Dendritic cell treated with granulocyte-macrophage colony-stimulating factor and Interleukin-4, amounts not matched to agents 40 ng/mL and 50 ng/mL, for 4 days (primary cell): ENCODE measurements at regions of chr15 and their contacts with region 1.

Region 1: DNA sequence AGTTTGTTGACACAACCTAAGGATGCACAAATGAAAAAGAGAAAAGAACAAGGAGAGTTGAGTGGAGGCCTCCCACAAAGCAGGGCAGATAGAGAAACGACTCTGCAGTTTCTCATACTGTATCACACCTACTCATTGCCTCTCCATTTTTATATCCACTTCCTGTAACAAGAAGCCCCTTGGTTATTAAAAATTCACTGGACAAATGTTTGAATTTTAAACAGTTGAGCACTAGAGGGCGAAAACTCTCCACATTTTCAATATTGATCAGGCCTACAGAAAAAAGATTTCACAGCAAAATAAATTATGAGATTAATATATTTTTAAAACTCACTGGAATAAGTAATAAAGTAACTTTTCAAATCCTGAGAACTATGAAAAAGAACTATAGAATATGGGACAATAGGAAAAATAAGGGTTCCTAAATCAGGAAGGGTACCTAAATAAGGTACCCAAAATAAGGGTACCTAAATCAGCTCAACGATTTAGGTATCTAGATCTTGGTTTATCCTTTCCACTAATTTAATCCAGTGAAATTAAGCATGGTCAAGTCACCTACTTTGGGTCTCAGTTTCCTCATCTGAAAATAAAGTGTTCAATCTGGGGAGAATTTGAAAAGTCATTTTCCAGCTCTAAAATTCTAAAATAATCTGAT is 47.0 kb upstream of the PPIB start:
- H3K4me3 Mint-ChIP-seq: no peak overlapping the region
- H3K27ac Mint-ChIP-seq: no peak overlapping the region
- H3K4me1 Mint-ChIP-seq: no peaks in the 10 kb centered on the region
- H3K27me3 Mint-ChIP-seq: no peaks in the 10 kb centered on the region

Region 2: DNA sequence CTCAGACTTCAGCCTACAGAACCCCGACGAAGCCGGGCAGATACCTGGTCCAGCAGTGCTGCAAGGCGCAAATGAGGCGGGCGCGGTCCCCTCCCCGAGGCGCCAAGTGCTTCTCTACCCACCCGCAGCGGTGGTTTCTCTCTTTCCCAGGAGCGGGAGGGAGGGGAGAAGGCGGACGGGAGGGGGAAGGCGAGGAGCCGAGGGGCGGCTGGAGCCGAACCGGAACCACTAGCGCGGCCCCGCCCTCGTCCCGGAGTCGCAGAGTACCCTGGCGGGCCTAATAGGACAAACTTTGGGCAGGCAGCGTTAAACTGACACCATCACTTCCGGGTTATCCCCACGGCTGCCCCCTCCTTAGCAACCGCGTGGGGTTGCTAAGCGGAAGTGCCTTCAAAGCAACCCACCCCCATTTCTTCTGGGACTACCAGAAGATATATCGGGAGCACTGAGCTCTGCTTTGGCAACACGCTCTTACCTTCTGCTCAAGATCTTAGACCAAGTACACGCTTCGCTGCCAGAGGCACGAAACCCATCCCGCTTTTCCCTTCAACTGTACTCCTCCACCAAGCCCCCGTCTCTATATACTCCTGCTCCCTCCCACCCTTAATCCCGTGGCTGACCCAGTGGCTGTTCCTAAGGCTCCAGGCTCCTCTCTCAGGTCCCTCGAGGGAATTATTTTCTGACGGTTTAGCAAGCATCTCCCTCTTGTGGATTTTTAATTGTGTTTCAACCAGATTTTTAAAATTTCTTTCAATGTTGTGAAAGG is 146.3 kb after region 1 on chr15 and contains the start of gene CSNK1G1:
- intact Hi-C with region 1: loop called (anchors 10 kb)
- H3K4me3 Mint-ChIP-seq: peak within 1 kb of the TSS; percentile 98
- H3K27ac Mint-ChIP-seq: peak within 1 kb of the TSS; percentile 94
- H3K4me1 Mint-ChIP-seq: peaks cover 28% of the 10 kb centered on the region
- H3K27me3 Mint-ChIP-seq: no peaks in the 10 kb centered on the region

Region 3: DNA sequence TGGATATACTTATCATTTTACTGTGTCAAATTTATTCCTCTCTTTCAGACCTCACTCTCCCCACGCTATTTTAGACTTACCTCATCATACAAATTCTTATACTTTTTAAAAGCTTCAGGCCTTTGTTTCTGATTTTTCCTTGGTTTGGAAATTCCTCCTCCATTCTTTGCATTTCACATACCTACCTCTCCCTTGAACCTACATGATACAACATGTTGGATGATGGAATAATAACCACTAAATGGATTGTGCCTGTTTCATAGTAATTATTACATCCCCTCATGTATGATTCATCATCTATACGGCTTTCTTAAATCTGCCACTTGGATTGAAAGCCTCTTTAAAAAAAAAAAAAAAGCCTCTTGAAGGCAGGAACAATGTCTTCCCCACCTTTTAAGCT is 202.4 kb after region 1 on chr15:
- intact Hi-C with region 1: no loop called
- H3K4me3 Mint-ChIP-seq: no peak overlapping the region
- H3K27ac Mint-ChIP-seq: no peak overlapping the region
- H3K4me1 Mint-ChIP-seq: no peaks in the 10 kb centered on the region
- H3K27me3 Mint-ChIP-seq: no peaks in the 10 kb centered on the region